ENCODE measurements at regions of chr18 and their contacts with region 1.

Region 1: DNA sequence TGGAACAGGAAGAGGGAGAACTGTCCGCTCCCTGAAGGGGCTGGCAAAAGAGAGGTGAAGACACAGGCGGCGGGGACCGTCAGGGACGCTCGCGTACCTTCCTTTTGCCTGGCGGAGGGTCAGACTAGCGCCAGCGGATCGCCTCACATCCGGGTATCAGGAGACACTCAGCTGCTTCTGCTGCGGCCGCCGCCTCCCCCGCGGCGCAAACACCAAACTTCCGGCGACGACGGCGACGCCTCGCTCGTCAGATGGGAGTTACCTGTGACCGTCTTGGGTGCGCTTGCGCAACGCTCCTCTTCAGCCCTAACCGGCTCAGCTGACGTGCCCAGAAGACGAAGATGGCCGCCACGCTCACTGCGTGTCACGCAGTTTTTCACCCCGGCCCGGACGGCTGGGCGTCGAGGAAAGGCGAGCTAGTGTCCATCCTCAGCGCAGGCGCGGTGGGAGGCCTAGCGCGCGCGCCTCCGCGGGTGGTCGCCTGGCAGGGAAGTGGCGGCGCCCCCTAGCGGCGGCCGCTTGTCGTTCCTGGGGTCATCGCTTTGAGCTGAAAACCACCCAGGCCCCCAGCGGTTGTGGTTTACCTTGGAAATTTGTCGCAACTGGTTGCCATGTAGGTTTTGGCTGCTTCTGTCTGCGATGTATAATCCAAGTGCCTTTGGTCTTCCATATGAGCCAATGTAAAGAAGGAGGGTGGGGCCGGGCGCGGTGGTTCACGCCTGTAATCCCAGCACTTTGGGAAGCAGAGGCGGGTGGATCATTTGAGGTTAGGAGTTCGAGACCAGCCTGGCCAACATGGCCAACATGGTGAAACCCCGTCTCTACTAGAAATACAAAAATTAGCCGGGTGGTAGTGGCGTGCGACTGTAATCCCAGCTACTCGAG is at the start of gene ESCO1:
- DNase-seq: peak; percentile 92
- ATAC-seq: peak; percentile 85
- H3K4me3 Mint-ChIP-seq: peak within 1 kb of the TSS; percentile 98
- H3K27ac Mint-ChIP-seq: peak within 1 kb of the TSS; percentile 100
- H3K4me1 Mint-ChIP-seq: peaks cover 14% of the 10 kb centered on the region
- H3K27me3 Mint-ChIP-seq: peaks cover 11% of the 10 kb centered on the region
- CTCF ChIP-seq: peak; percentile 98
- total RNA-seq, gene ESCO1: 35.2 to 46.5 TPM (median 35.5 TPM) in 3 replicates

Region 2: GRCh38 chr18:21316296-21316695 is 284.5 kb before region 1 on chr18:
- CTCF ChIA-PET with region 1: no interaction called
- POLR2A ChIA-PET with region 1: no interaction called
- DNase-seq: no peak
- ATAC-seq: no peak
- H3K4me3 Mint-ChIP-seq: no peak overlapping the region
- H3K27ac Mint-ChIP-seq: no peak overlapping the region
- H3K4me1 Mint-ChIP-seq: peaks cover 8% of the 10 kb centered on the region
- H3K27me3 Mint-ChIP-seq: no peaks in the 10 kb centered on the region
- CTCF ChIP-seq: no peak

Region 3: GRCh38 chr18:21489119-21489750 is 111.5 kb before region 1 on chr18:
- CTCF ChIA-PET with region 1: interaction called, 11 read pairs
- POLR2A ChIA-PET with region 1: interaction called, 8 read pairs
- DNase-seq: peak; percentile 60
- ATAC-seq: peak; percentile 90
- H3K4me3 Mint-ChIP-seq: no peak overlapping the region
- H3K27ac Mint-ChIP-seq: no peak overlapping the region
- H3K4me1 Mint-ChIP-seq: peaks cover 11% of the 10 kb centered on the region
- H3K27me3 Mint-ChIP-seq: no peaks in the 10 kb centered on the region; the same call in 1 of the 2 replicates
- CTCF ChIP-seq: peak; percentile 67

Region 4: GRCh38 chr18:21612125-21612991 is 11.6 kb after region 1 on chr18 and contains the start of gene SNRPD1:
- CTCF ChIA-PET with region 1: interaction called, 86 read pairs
- POLR2A ChIA-PET with region 1: interaction called, 24 read pairs
- DNase-seq: peak; percentile 91
- ATAC-seq: peak; percentile 97
- H3K4me3 Mint-ChIP-seq: peak within 1 kb of the TSS; percentile 97
- H3K27ac Mint-ChIP-seq: peak within 1 kb of the TSS; percentile 99
- H3K4me1 Mint-ChIP-seq: peaks cover 21% of the 10 kb centered on the region
- H3K27me3 Mint-ChIP-seq: no peaks in the 10 kb centered on the region; the same call in 1 of the 2 replicates
- CTCF ChIP-seq: peak; percentile 79
- total RNA-seq, gene SNRPD1: 136 to 140 TPM (median 137 TPM) in 3 replicates

Region 5: GRCh38 chr18:21669736-21670135 is 69.0 kb after region 1 on chr18:
- CTCF ChIA-PET with region 1: interaction called, 14 read pairs
- POLR2A ChIA-PET with region 1: no interaction called
- DNase-seq: no peak
- ATAC-seq: no peak; the same call in 1 of the 2 replicates
- H3K4me3 Mint-ChIP-seq: no peak overlapping the region
- H3K27ac Mint-ChIP-seq: 0 out of 2 replicates have a peak overlapping the region, but pooled peaks have one; percentile 0
- H3K4me1 Mint-ChIP-seq: peaks cover 6% of the 10 kb centered on the region; the same call in 1 of the 2 replicates
- H3K27me3 Mint-ChIP-seq: no peaks in the 10 kb centered on the region
- CTCF ChIP-seq: no peak

Region 6: GRCh38 chr18:21704603-21705364 is 104.0 kb after region 1 on chr18 and contains the start of gene ABHD3:
- CTCF ChIA-PET with region 1: interaction called, 12 read pairs
- POLR2A ChIA-PET with region 1: interaction called, 16 read pairs
- DNase-seq: peak; percentile 93
- ATAC-seq: peak; percentile 96
- H3K4me3 Mint-ChIP-seq: peak within 1 kb of the TSS; percentile 86
- H3K27ac Mint-ChIP-seq: peak within 1 kb of the TSS; percentile 69
- H3K4me1 Mint-ChIP-seq: peaks cover 17% of the 10 kb centered on the region
- H3K27me3 Mint-ChIP-seq: peaks cover 12% of the 10 kb centered on the region
- CTCF ChIP-seq: no peak
- total RNA-seq, gene ABHD3: 11.1 to 12.1 TPM (median 11.5 TPM) in 3 replicates

Region 7: DNA sequence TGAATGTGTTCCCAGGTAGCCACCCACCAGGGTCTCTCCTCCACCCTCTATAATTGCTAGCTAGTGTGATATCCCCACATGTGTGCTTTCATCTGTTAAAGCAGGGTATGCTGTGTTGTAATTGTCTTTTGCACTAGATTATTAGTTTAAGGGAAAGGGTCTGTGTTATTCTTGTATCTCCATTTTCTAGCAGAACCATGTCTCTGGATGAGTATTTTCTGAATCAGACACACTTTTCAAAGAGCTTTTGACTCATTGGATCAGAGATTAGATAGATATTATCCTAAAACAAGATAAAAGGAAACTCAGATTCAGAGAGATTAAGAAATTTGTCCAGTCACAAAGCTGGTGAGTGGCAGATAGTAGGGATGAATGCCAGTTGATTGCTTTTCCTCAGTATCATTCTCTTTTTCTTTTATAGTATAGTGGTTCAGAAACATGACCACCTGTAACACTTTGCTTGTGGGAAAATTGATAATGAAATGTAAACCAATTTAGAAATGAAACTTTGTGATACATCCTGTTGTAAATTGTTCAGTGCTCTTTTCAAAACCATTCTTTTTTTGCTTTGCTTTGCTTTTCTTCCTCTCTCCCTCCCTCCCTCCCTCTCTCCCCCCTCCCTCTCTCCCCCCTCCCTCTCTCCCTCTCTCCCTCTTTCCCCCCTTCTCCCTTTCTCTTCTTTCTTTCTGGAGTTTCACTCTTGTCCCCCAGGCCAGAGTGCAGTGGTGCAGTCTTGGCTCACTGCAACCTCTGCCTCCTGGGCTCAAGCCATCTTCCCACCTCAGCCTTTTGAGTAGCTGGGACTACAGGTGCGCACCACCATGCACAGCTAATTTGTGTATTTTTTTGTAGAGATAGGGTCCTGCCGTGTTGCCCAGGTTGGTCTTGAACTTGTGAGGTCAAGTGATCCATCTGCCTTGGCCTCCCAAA is 147.3 kb after region 1 on chr18:
- CTCF ChIA-PET with region 1: interaction called, 14 read pairs
- POLR2A ChIA-PET with region 1: no interaction called
- DNase-seq: no peak
- ATAC-seq: no peak
- H3K4me3 Mint-ChIP-seq: no peak overlapping the region
- H3K27ac Mint-ChIP-seq: peak overlapping the region; percentile 57; the same call in 1 of the 2 replicates
- H3K4me1 Mint-ChIP-seq: peaks cover 45% of the 10 kb centered on the region
- H3K27me3 Mint-ChIP-seq: no peaks in the 10 kb centered on the region
- CTCF ChIP-seq: no peak

Region 8: DNA sequence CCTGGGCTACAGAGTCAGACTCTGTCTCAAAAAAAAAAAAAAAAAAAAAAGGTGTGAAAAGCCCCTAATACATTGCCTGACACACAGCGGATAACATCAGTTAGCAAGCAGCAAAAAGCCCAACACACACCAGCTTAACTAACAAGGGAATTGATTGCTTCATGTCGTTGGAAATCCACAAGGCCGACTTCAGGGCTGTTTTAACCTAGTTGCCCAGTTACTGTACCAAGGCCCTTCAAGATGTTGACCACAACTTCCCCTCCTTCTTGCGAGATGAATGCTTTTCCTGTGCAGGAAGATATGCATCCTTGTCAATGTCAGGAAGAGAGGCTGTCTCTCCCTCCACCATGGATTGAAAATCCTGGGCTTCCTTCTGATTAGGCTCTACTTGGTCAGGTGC is 342.7 kb after region 1 on chr18:
- CTCF ChIA-PET with region 1: no interaction called
- POLR2A ChIA-PET with region 1: no interaction called
- DNase-seq: no peak
- ATAC-seq: no peak
- H3K4me3 Mint-ChIP-seq: no peak overlapping the region
- H3K27ac Mint-ChIP-seq: no peak overlapping the region
- H3K4me1 Mint-ChIP-seq: no peaks in the 10 kb centered on the region
- H3K27me3 Mint-ChIP-seq: peaks cover 14% of the 10 kb centered on the region
- CTCF ChIP-seq: no peak

Measured in WTC11 (cell line).